ENCODE measurements at regions of chr1 and their contacts with region 1.

Region 1: DNA sequence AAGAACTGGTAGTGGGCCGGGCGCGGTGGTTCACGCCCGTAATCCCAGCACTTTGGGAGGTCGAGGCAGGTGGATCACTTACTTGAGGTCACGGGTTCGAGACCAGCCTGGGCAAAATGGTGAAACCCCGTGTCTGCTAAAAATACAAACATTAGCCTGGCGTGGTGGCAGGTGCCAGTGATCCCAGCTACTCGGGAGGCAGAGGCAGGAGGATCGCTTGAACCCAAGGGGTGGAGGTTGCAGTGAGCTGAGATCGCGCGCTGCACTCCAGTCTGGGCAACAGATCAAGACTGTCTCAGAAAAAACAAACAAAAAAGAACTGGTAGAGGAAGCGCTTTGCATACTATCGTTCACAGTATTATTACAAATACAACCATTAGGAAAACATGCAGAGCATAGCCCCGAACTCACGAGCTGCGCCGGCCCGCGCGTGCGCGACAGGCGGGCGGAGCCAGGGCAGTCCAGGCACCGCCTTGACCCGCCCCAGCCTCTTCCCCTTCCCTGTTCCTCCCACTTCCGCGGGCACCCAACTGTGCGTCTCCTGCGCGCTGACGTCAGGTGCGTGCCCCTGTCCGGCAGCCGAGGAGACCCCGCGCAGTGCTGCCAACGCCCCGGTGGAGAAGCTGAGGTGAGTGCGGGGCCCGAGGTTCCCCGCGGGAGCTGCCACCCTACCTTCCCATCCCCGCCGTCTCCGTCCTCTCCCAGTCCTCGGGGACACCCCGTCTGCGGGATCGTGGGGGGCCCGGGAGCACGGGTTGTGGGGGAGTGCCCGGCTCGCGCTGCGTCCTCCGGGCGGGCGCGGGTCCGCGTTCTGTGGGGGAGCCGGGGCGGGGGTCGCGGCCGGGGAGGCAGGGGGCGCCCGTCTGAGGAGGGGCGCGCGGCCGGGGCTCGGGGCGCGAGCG is at the start of gene CDC42:
- DNase-seq: peak; percentile 96

Region 2: GRCh38 chr1:21966247-21967000 is 85.9 kb before region 1 on chr1:
- CTCF ChIA-PET with region 1: no interaction called
- POLR2A ChIA-PET with region 1: no interaction called
- DNase-seq: no peak

Region 3: DNA sequence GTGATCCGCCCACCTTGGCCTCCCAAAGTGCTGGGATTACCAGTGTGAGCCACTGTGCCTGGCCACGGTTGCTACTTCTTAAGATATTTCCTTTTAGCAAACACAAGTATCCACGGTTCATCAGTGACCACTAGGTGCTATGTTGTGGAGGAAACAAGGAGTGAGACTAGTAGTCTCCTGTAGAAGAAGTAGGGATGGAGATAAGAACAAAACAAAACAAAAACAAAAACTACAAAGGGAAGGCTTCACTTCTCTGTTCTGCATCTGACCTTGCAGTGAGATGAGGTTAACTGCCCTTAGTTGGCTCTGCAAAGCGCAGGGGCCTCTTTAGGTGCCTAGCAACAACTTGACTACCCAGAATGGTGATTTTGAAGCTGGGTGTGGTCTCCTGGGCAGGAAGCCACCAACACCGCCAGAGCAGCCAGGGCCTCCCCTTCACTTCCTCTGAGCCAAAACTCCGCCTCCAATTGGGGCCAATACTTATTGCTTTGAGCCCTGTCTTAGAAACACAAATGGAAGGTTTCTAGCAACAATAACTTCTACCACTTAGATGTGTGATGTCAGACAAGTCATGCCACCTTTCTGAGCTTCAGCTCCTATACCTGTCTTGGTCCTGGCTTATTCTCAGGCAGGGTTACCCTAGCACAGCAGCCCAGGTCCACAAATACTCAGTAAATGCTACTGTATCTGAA is 12.6 kb before region 1 on chr1:
- CTCF ChIA-PET with region 1: no interaction called
- POLR2A ChIA-PET with region 1: interaction called, 14 read pairs
- DNase-seq: peak; percentile 36

Measured in HEK293T (cell line).